Gastrocnemius medialis (tissue), 4 donors: ENCODE measurements at regions of chr7 and their contacts with region 1.

Region 1: GRCh38 chr7:73865738-73866445 is 4.9 kb downstream of the TMEM270 start:
- DNase-seq: no peak
- ATAC-seq: peak; percentile 58 to 64
- H3K4me3 ChIP-seq: no peak overlapping the region
- H3K27ac ChIP-seq: no peak overlapping the region
- H3K4me1 ChIP-seq: peaks cover 0 to 3% of the 10 kb centered on the region in 2 donors
- H3K27me3 ChIP-seq: no peaks in the 10 kb centered on the region
- CTCF ChIP-seq: peak; percentile 28 to 58 (median 56)
- POLR2A ChIP-seq: no peak

Region 2: DNA sequence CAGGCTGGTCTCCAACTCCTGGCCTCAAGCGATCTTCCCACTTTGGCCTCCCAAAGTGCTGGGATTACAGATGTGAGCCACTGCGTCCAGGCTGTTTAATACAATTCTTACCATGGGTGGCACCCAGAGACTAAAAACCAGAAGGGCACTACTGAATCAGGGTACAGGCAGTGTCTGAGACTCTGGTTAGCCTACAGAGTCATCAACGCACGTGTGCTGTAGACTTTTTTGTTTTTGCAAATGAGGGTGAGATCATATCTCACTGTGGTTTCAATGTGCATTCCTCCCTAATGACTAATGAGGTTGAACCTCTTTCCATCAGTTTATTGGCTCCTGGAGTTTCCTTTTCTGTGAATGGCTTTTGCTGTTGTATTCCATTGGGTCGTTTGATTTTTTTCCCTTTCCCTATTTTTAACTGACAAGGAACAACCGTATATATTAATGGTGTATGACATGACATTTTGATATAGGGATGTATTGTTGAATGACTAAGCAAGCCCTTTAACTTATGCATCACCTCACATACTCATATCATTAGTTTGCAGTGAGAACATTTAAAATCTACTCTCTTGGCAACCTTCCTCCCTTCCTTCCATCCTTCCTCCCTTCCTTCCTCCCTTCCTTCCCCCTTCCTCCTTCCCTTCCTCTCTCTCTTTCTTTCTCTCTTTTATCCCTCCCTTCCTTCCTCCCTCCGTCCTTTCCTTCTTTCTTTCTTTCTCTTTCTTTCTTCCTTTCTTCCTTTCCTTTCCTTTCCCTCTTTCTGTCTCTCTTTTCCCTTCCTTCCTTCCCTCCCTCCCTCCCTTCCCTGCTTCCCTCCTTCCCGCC is 14.3 kb before region 1 on chr7:
- in situ Hi-C with region 1: no loop called
- intact Hi-C with region 1: no loop called
- DNase-seq: no peak
- ATAC-seq: peak; percentile 34 to 87
- H3K4me3 ChIP-seq: no peak overlapping the region
- H3K27ac ChIP-seq: peak overlapping the region; percentile 27 to 56 (median 42)
- H3K4me1 ChIP-seq: no peaks in the 10 kb centered on the region
- H3K27me3 ChIP-seq: peaks cover 0 to 5% (median 0%) of the 10 kb centered on the region in 3 donors
- CTCF ChIP-seq: no peak
- POLR2A ChIP-seq: no peak

Region 3: DNA sequence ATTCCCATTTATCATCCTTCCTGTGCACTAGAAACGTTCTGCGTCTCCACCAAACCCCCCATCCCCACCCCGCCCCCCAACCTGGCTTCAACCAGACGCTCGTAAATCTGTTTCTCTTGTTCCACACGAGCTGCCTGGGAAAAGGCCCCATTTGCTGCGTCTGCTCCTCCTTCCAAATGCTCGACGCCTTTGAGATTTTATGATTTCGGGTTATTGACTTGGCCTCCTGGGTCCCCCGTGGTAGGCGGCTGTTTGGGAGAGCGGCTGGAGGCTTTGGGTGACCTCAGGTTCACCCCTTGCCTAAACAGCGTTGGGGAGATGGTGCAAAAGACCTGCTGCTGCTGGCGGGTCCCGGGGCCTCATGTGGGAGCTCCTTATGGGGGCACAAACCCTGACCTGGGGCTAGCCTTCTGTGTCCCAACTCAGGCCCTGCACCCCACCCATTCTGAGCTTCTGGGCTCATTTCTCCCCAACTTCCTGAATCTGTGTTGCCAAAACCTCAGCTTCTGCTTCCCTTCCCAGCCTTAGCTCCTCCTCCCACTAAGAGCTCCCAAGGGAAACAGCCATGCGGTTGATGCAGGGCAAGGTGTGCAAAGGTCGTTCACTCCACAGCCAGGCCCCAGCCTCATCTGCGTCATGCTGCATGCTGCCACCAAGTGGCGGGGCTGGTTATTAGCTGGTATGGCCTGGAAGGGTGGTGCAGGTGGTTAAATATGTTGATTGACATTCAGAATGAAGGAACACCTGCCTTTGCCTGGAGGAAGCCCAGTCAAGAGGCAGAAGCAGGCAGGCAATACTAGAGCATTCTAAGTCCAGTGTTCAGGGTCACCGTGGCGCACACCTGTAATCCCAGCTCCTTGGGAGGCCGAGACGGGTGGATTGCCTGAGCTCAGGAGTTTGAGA is 113.0 kb after region 1 on chr7:
- in situ Hi-C with region 1: no loop called
- intact Hi-C with region 1: loop called (anchors 5 kb)
- DNase-seq: peak; percentile 34 to 72
- ATAC-seq: peak; percentile 89 to 95
- H3K4me3 ChIP-seq: no peak overlapping the region
- H3K27ac ChIP-seq: peak overlapping the region in 1 of 4 donors; percentile 54
- H3K4me1 ChIP-seq: peaks cover 4 to 8% of the 10 kb centered on the region in 2 donors
- H3K27me3 ChIP-seq: no peaks in the 10 kb centered on the region
- CTCF ChIP-seq: peak in 4 of 5 experiments; percentile 38 to 59 (median 49)
- POLR2A ChIP-seq: no peak

Region 4: DNA sequence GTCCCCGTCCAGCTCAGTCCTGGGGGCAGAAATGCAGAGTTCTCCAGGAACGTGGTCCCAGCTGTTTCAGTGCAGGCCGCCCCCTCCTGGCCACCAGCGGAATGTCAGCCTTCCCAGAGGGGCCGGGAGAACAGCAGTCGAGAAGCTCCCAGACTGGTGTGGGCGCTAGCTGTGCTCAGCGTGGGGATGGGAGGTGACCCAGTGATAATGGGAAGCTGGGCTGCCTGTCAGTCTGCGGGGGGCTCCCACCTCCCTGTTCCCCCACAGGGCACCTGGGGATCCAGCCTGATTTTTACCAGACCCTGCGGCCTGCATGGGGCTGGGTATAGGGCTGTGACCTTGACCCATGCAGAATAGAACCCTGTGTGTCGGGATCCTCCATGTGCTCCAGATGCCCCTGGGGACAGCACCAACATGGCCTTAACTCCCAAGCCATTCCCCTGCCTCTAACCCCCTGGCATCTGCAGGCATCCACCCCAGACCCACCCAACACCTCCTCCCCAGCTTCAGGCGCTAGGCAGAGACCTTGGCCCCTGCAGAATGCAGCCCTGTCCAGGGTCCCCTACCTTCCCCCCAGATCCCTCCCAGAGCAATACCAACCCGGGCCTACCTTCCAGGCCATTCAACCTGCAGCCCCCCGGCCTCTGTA is 161.1 kb after region 1 on chr7:
- in situ Hi-C with region 1: loop called in 3 of 4 experiments (anchors 5 to 10 kb)
- intact Hi-C with region 1: loop called (anchors 1 kb)
- DNase-seq: peak; percentile 51 to 61
- ATAC-seq: peak; percentile 57 to 60
- H3K4me3 ChIP-seq: peak overlapping the region; percentile 29 to 49 (median 48)
- H3K27ac ChIP-seq: peak overlapping the region; percentile 53 to 70 (median 62)
- H3K4me1 ChIP-seq: peaks cover 26 to 44% of the 10 kb centered on the region in 2 donors
- H3K27me3 ChIP-seq: peaks cover 0 to 17% (median 0%) of the 10 kb centered on the region in 3 donors
- CTCF ChIP-seq: peak; percentile 70 to 95 (median 89)
- POLR2A ChIP-seq: no peak